ENCODE measurements at regions of chr1 and their contacts with region 1.

Region 1: DNA sequence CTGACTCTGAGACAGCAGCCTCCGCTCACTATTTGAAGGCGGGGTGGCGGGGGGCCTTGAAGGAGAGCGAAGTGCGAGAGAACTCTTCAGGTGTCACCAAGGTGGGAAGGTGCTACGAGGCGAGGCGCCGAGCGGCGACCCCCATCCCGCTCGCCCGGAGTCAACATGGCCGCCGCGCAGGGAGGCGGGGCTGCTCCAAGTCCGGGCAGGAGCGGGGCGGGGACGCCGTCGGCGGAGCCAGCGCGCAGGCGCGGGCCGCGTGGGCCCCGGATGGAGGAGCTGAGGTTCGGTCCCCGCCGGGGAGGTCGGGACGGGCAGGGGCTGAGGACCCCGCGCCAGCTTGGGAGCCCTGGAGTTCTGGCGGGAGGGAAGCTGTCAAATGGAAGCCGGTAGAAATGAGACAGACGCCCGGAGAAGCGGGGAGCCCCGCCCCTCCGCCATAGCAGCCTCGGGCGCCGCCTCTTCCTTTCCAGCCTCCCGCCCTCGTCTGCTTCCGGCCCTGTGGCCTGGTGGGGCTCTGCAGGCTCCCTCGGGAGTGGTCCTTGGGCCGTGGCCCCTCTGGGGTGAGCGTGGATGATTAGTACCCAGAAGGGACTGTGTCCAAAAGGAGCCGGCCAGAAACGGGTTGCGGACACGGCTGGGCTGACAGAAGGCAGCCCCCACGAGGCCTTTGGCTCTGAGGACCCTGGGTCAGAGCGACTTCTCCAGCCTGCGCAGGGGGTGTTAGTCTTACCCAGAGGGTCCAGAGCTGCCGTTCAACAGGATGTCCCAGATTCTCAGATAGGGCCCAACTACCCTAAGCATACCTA is at the start of gene PIGV:
- DNase-seq: peak; percentile 90
- H3K4me3 ChIP-seq: peak within 1 kb of the TSS; percentile 51 to 76 (median 52)
- H3K27ac ChIP-seq: peak within 1 kb of the TSS; percentile 69
- H3K4me1 ChIP-seq: peaks cover 48% of the 10 kb centered on the region
- H3K27me3 ChIP-seq: no peaks in the 10 kb centered on the region
- CTCF ChIP-seq: peak in 1 of 2 donors; percentile 23
- POLR2A ChIP-seq: peak; percentile 91
- total RNA-seq, gene PIGV: 6.0 and 7.5 TPM in 2 replicates

Region 2: GRCh38 chr1:26614655-26615411 is 173.1 kb before region 1 on chr1:
- CTCF ChIA-PET with region 1: interaction called, 428 read pairs
- POLR2A ChIA-PET with region 1: no interaction called
- dilution Hi-C with region 1: no loop called
- intact Hi-C with region 1: no loop called
- DNase-seq: no peak
- H3K4me3 ChIP-seq: no peak overlapping the region
- H3K27ac ChIP-seq: no peak overlapping the region
- H3K4me1 ChIP-seq: peaks cover 7% of the 10 kb centered on the region
- H3K27me3 ChIP-seq: peaks cover 10 to 17% of the 10 kb centered on the region in 2 experiments
- CTCF ChIP-seq: no peak
- POLR2A ChIP-seq: no peak

Region 3: GRCh38 chr1:26695356-26696118 is 92.4 kb before region 1 on chr1 and contains the start of gene ARID1A:
- CTCF ChIA-PET with region 1: interaction called, 81 read pairs
- POLR2A ChIA-PET with region 1: interaction called, 6 read pairs
- dilution Hi-C with region 1: loop called (anchors 5 kb)
- intact Hi-C with region 1: loop called (anchors 1 kb)
- DNase-seq: peak; percentile 98
- H3K4me3 ChIP-seq: peak within 1 kb of the TSS; percentile 56 to 83 (median 81)
- H3K27ac ChIP-seq: peak within 1 kb of the TSS; percentile 74
- H3K4me1 ChIP-seq: peaks cover 50% of the 10 kb centered on the region
- H3K27me3 ChIP-seq: no peaks in the 10 kb centered on the region
- CTCF ChIP-seq: peak in 1 of 2 donors; percentile 12
- POLR2A ChIP-seq: peak; percentile 86
- total RNA-seq, gene ARID1A: 67.0 and 77.2 TPM in 2 replicates

Region 4: GRCh38 chr1:26705788-26706311 is 82.1 kb before region 1 on chr1:
- CTCF ChIA-PET with region 1: interaction called, 81 read pairs
- POLR2A ChIA-PET with region 1: no interaction called
- dilution Hi-C with region 1: loop called (anchors 5 kb)
- intact Hi-C with region 1: no loop called
- DNase-seq: peak; percentile 59
- H3K4me3 ChIP-seq: no peak overlapping the region
- H3K27ac ChIP-seq: peak overlapping the region; percentile 26
- H3K4me1 ChIP-seq: peaks cover 44% of the 10 kb centered on the region
- H3K27me3 ChIP-seq: no peaks in the 10 kb centered on the region
- CTCF ChIP-seq: no peak
- POLR2A ChIP-seq: peak; percentile 7

Region 5: DNA sequence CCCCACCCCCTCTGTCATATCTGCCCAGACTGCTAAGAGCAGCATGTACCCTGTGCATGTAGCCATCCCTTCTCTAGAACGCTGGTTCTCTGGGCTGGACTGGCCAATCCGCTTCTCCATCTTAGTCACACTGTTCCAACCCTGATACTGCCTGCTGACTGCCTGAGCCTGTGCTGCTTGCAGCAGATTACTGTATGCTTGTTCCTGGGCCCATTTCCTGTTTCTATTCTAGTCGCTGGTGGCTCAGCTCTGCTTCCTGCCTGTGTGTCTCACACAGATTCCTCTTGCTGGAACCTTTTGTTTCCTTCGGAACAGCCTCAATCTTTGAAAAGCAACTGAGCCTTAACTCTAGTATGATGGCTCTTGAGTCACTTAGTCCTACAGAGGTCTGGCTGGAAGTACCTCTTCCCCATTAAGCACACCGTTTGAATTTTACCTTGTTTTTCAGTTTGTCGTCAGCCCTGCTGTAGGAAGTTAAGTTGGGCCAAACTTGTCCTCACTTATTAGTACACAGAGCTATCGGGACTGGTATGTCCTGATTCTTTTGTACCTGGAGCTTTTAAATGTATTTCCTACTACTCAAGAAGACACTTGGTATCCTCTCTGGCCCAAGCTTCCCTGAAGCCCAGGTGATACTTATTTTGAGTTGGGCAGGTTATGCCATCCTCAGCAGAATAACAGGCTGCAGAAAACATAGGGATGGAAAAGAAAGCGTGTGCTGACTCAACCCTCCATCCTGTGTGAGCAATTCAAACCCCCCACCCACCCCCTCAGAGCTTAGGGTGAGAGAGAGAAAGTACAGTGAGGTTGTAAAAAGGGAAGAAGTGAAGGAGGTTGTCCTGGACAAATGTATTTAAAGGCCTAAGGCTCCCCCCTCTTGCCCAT is 43.6 kb before region 1 on chr1:
- CTCF ChIA-PET with region 1: interaction called, 23 read pairs
- POLR2A ChIA-PET with region 1: no interaction called
- dilution Hi-C with region 1: no loop called
- intact Hi-C with region 1: loop called (anchors 1 kb)
- DNase-seq: peak; percentile 98
- H3K4me3 ChIP-seq: peak overlapping the region in 1 of 3 experiments; percentile 35
- H3K27ac ChIP-seq: peak overlapping the region; percentile 82
- H3K4me1 ChIP-seq: peaks cover 27% of the 10 kb centered on the region
- H3K27me3 ChIP-seq: no peaks in the 10 kb centered on the region
- CTCF ChIP-seq: no peak
- POLR2A ChIP-seq: peak; percentile 25

Region 6: GRCh38 chr1:26771643-26772321 is 16.1 kb before region 1 on chr1:
- CTCF ChIA-PET with region 1: interaction called, 20 read pairs
- POLR2A ChIA-PET with region 1: no interaction called
- dilution Hi-C with region 1: no loop called
- intact Hi-C with region 1: loop called (anchors 1 kb)
- DNase-seq: peak; percentile 75
- H3K4me3 ChIP-seq: no peak overlapping the region
- H3K27ac ChIP-seq: peak overlapping the region; percentile 87
- H3K4me1 ChIP-seq: peaks cover 40% of the 10 kb centered on the region
- H3K27me3 ChIP-seq: no peaks in the 10 kb centered on the region
- CTCF ChIP-seq: no peak
- POLR2A ChIP-seq: peak; percentile 30

Region 7: GRCh38 chr1:26811057-26811456 is 23.1 kb after region 1 on chr1:
- CTCF ChIA-PET with region 1: interaction called, 15 read pairs
- POLR2A ChIA-PET with region 1: no interaction called
- dilution Hi-C with region 1: no loop called
- intact Hi-C with region 1: no loop called
- DNase-seq: no peak
- H3K4me3 ChIP-seq: no peak overlapping the region
- H3K27ac ChIP-seq: no peak overlapping the region
- H3K4me1 ChIP-seq: no peaks in the 10 kb centered on the region
- H3K27me3 ChIP-seq: no peaks in the 10 kb centered on the region
- CTCF ChIP-seq: no peak
- POLR2A ChIP-seq: no peak